ENCODE measurements at regions of chr6 and their contacts with region 1.

Region 1: DNA sequence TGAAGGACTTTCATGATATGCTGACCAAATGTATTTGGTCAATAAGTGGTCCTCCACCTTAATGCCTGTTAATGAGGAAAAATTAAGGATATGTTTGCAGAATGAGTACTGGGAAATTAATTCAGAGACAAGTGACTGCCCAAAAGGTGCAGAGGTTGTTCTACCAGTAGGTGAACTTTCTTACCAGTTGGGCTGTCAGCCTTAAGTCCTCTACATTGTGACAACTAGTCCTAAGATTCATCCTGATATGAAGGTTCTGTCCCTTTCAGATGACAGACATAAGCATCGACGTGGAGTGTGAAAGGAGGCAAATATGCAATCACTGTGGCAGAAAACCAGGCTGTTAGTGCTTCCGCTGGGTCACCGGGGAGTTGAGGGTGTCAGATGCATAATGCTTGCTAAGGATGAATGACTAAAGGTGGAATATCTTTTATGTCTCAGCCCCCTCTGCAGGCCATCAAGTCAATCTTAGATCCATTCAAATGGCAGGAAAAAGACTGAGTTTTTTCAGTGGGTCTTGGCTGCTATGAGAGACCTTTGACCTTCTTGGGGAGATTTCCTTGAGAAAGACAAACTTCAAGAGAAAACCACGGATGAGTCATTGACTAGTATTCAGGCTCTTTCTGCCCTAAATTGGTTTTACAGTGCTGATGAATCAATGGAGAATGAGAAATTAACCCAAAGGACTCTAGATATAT is 226.0 kb downstream of the TPBG start:
- DNase-seq: no peak
- H3K4me3 ChIP-seq: no peak overlapping the region
- H3K27ac ChIP-seq: no peak overlapping the region
- H3K4me1 ChIP-seq: no peaks in the 10 kb centered on the region
- H3K27me3 ChIP-seq: no peaks in the 10 kb centered on the region
- CTCF ChIP-seq: no peak
- EP300 ChIP-seq: no peak
- POLR2A ChIP-seq: no peak

Region 2: DNA sequence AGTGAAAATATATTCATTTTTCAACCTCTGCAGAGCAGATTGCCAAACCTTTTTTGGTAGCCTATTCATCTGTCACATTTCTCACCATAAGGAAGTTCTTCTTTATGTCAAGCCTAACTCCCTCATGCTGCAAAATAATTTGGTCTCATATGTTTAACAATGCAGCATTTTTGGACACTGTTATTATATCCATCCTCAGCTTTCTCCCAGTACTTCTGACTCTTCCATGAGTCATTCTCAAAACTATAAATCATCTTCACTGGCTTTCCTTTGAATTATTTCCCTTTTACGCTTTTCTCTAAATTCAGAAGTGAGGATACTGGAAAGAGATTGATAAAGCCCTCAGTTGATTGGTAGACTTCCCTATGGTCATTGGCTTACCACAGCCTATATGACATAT is 33.9 kb before region 1 on chr6:
- in situ Hi-C with region 1: no loop called
- intact Hi-C with region 1: loop called (anchors 1 kb)
- DNase-seq: no peak
- H3K4me3 ChIP-seq: no peak overlapping the region
- H3K27ac ChIP-seq: no peak overlapping the region
- H3K4me1 ChIP-seq: no peaks in the 10 kb centered on the region
- H3K27me3 ChIP-seq: no peaks in the 10 kb centered on the region
- CTCF ChIP-seq: no peak
- EP300 ChIP-seq: no peak
- POLR2A ChIP-seq: no peak

Region 3: GRCh38 chr6:82571455-82571854 is 18.2 kb before region 1 on chr6:
- in situ Hi-C with region 1: no loop called
- intact Hi-C with region 1: no loop called
- DNase-seq: no peak
- H3K4me3 ChIP-seq: no peak overlapping the region
- H3K27ac ChIP-seq: no peak overlapping the region
- H3K4me1 ChIP-seq: no peaks in the 10 kb centered on the region
- H3K27me3 ChIP-seq: no peaks in the 10 kb centered on the region
- CTCF ChIP-seq: no peak
- EP300 ChIP-seq: no peak
- POLR2A ChIP-seq: no peak

Region 4: GRCh38 chr6:82624212-82624611 is 34.6 kb after region 1 on chr6:
- in situ Hi-C with region 1: no loop called
- intact Hi-C with region 1: no loop called
- DNase-seq: no peak
- H3K4me3 ChIP-seq: no peak overlapping the region
- H3K27ac ChIP-seq: no peak overlapping the region
- H3K4me1 ChIP-seq: no peaks in the 10 kb centered on the region
- H3K27me3 ChIP-seq: no peaks in the 10 kb centered on the region
- CTCF ChIP-seq: no peak
- EP300 ChIP-seq: no peak
- POLR2A ChIP-seq: no peak

Region 5: GRCh38 chr6:82687855-82688254 is 98.2 kb after region 1 on chr6:
- in situ Hi-C with region 1: no loop called
- intact Hi-C with region 1: no loop called
- DNase-seq: no peak
- H3K4me3 ChIP-seq: no peak overlapping the region
- H3K27ac ChIP-seq: no peak overlapping the region
- H3K4me1 ChIP-seq: peaks cover 0 to 8% (median 3%) of the 10 kb centered on the region in 4 donors
- H3K27me3 ChIP-seq: no peaks in the 10 kb centered on the region
- CTCF ChIP-seq: no peak
- EP300 ChIP-seq: no peak
- POLR2A ChIP-seq: no peak

Region 6: GRCh38 chr6:84346364-84346763 is 1756.7 kb after region 1 on chr6:
- in situ Hi-C with region 1: no loop called
- intact Hi-C with region 1: no loop called
- DNase-seq: no peak
- H3K4me3 ChIP-seq: no peak overlapping the region
- H3K27ac ChIP-seq: no peak overlapping the region
- H3K4me1 ChIP-seq: no peaks in the 10 kb centered on the region
- H3K27me3 ChIP-seq: no peaks in the 10 kb centered on the region
- CTCF ChIP-seq: no peak
- EP300 ChIP-seq: no peak
- POLR2A ChIP-seq: no peak